ENCODE measurements at regions of chr1 and their contacts with region 1.

Region 1: GRCh38 chr1:220089650-220090556 is at the start of gene BPNT1:
- DNase-seq: peak; percentile 88
- ATAC-seq: peak; percentile 69
- H3K4me3 Mint-ChIP-seq: peak within 1 kb of the TSS; percentile 95
- H3K27ac Mint-ChIP-seq: peak within 1 kb of the TSS; percentile 96
- H3K4me1 Mint-ChIP-seq: peaks cover 34% of the 10 kb centered on the region
- H3K27me3 Mint-ChIP-seq: no peaks in the 10 kb centered on the region
- CTCF ChIP-seq: no peak
- total RNA-seq, gene BPNT1: 22.8 and 23.6 TPM in 2 replicates

Region 2: DNA sequence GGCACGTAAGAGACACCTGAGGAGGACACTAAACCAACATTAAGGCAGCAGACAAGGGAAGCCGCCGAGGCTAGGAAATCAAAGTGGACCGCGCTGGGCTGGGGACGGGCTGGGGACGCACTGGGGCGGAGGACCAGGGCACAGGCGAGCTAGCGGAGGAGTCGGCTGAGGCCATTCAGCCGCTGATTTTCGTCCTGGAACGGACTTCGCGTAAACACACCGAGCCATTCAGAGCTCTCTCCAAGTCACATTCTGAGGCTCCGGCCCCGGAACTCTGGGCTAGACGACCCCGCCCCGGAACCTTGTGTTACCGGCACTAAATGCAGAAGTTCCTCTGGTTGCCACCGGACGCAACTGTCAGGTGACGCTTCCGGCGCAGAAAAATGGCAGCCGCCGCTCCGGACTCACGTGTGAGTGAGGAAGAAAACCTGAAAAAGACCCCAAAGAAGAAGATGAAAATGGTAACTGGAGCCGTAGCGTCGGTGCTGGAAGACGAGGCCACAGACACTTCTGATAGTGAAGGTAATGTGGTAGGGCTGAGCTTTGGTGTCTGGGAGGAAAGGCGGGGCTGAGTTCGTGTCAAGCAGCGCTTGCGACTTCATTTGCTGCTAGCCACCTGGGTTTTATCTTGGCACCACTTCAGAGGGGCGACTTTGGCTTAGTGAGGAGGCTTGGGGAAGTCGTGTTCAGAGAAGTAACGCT is 1804.8 kb before region 1 on chr1 and contains the start of gene RRP15:
- CTCF ChIA-PET with region 1: no interaction called
- POLR2A ChIA-PET with region 1: interaction called, 5 read pairs
- intact Hi-C with region 1: loop called (anchors 2 kb)
- DNase-seq: peak; percentile 85
- ATAC-seq: peak; percentile 99
- H3K4me3 Mint-ChIP-seq: peak within 1 kb of the TSS; percentile 96
- H3K27ac Mint-ChIP-seq: peak within 1 kb of the TSS; percentile 97
- H3K4me1 Mint-ChIP-seq: peaks cover 30% of the 10 kb centered on the region
- H3K27me3 Mint-ChIP-seq: peaks cover 9% of the 10 kb centered on the region
- CTCF ChIP-seq: no peak
- total RNA-seq, gene RRP15: 26.9 and 27.3 TPM in 2 replicates

Region 3: GRCh38 chr1:219990782-219991510 is 99.0 kb before region 1 on chr1:
- CTCF ChIA-PET with region 1: no interaction called
- POLR2A ChIA-PET with region 1: interaction called, 3 read pairs
- intact Hi-C with region 1: loop called (anchors 2 kb)
- DNase-seq: no peak
- ATAC-seq: no peak
- H3K4me3 Mint-ChIP-seq: no peak overlapping the region
- H3K27ac Mint-ChIP-seq: peak overlapping the region; percentile 53
- H3K4me1 Mint-ChIP-seq: peaks cover 49% of the 10 kb centered on the region
- H3K27me3 Mint-ChIP-seq: no peaks in the 10 kb centered on the region
- CTCF ChIP-seq: no peak

Region 4: GRCh38 chr1:220056374-220056773 is 33.5 kb before region 1 on chr1:
- CTCF ChIA-PET with region 1: no interaction called
- POLR2A ChIA-PET with region 1: interaction called, 13 read pairs
- intact Hi-C with region 1: no loop called
- DNase-seq: no peak
- ATAC-seq: no peak
- H3K4me3 Mint-ChIP-seq: no peak overlapping the region
- H3K27ac Mint-ChIP-seq: no peak overlapping the region
- H3K4me1 Mint-ChIP-seq: no peaks in the 10 kb centered on the region
- H3K27me3 Mint-ChIP-seq: no peaks in the 10 kb centered on the region
- CTCF ChIP-seq: no peak

Region 5: DNA sequence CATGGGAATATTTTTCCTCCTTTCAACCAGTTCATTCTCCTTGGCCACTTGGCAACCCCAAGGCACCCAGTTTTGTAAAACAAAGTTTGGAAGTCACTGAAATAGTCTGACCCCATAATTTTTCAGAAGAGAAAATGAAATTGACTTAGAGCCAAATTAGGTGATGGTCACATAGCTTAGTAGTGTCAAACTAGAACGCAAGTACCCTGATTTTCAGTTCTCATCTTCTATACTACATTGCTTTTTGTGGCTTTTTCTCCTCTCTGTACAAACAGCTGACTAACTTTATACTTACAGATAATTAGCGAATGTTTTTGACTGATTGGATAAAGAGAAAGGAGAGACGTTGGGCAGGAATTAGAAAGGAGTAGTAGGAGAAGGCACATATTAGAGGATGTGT is 37.2 kb after region 1 on chr1:
- CTCF ChIA-PET with region 1: no interaction called
- POLR2A ChIA-PET with region 1: no interaction called
- intact Hi-C with region 1: no loop called
- DNase-seq: no peak
- ATAC-seq: no peak
- H3K4me3 Mint-ChIP-seq: no peak overlapping the region
- H3K27ac Mint-ChIP-seq: no peak overlapping the region
- H3K4me1 Mint-ChIP-seq: no peaks in the 10 kb centered on the region
- H3K27me3 Mint-ChIP-seq: no peaks in the 10 kb centered on the region
- CTCF ChIP-seq: no peak

Region 6: GRCh38 chr1:220690140-220691025 is 600.5 kb after region 1 on chr1 and contains the start of gene C1orf115:
- CTCF ChIA-PET with region 1: no interaction called
- POLR2A ChIA-PET with region 1: no interaction called
- intact Hi-C with region 1: loop called (anchors 5 kb)
- DNase-seq: peak; percentile 86
- ATAC-seq: peak; percentile 98
- H3K4me3 Mint-ChIP-seq: peak within 1 kb of the TSS; percentile 92
- H3K27ac Mint-ChIP-seq: peak within 1 kb of the TSS; percentile 68
- H3K4me1 Mint-ChIP-seq: peaks cover 26% of the 10 kb centered on the region
- H3K27me3 Mint-ChIP-seq: peaks cover 5% of the 10 kb centered on the region
- CTCF ChIP-seq: peak; percentile 90
- total RNA-seq, gene C1orf115: 19.6 and 20.0 TPM in 2 replicates